ENCODE measurements at regions of chr4 and their contacts with region 1.

Region 1: GRCh38 chr4:22389240-22389870 is 126.5 kb downstream of the ADGRA3 start:
- DNase-seq: peak; percentile 21 to 84 (median 63)

Region 2: GRCh38 chr4:21790438-21791029 is 598.8 kb before region 1 on chr4:
- intact Hi-C with region 1: loop called (anchors 5 kb)
- DNase-seq: peak in 2 of 42 donors; percentile 19 to 26

Region 3: GRCh38 chr4:22490718-22491315 is 101.5 kb after region 1 on chr4:
- intact Hi-C with region 1: no loop called
- DNase-seq: no peak

Measured in head of caudate nucleus (tissue), 42 donors.